ENCODE measurements at regions of chr17 and their contacts with region 1.

Region 1: DNA sequence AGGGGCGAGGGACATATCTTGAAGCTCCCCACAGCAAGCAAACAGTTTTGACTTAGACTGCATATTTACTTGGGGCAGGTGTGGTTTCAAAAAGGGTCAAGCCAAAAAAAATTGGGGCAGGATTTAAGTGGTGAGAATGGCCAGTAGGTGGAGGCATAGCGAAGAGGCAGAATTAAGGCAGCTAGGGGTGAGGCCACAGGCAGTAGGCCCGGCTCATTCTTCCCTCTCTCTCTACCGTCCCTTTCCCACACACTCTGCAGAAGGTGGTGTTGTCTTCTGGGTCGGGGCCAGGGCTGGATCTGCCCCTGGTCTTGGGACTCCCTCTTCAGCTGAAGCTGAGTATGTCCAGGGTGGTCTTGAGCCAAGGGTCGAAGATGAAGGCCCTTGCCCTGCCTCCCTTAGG is 2.6 kb downstream of the SHBG start:
- DNase-seq: peak; percentile 39 to 66
- H3K4me3 ChIP-seq: no peak overlapping the region
- H3K27ac ChIP-seq: no peak overlapping the region
- H3K4me1 ChIP-seq: peaks cover 0 to 12% (median 3%) of the 10 kb centered on the region in 4 experiments; a peak in 3 of 7 replicates
- H3K27me3 ChIP-seq: no peaks in the 10 kb centered on the region
- CTCF ChIP-seq: peak; percentile 61 to 85 (median 79)
- EP300 ChIP-seq: no peak
- POLR2A ChIP-seq: no peak
- RAD21 ChIP-seq: peak; percentile 75 to 81

Region 2: GRCh38 chr17:7496470-7497183 is 135.9 kb before region 1 on chr17:
- CTCF ChIA-PET with region 1: no interaction called
- POLR2A ChIA-PET with region 1: no interaction called
- DNase-seq: no peak
- H3K4me3 ChIP-seq: no peak overlapping the region
- H3K27ac ChIP-seq: no peak overlapping the region
- H3K4me1 ChIP-seq: no peaks in the 10 kb centered on the region
- H3K27me3 ChIP-seq: no peaks in the 10 kb centered on the region
- CTCF ChIP-seq: no peak
- EP300 ChIP-seq: no peak
- POLR2A ChIP-seq: no peak
- RAD21 ChIP-seq: no peak

Region 3: DNA sequence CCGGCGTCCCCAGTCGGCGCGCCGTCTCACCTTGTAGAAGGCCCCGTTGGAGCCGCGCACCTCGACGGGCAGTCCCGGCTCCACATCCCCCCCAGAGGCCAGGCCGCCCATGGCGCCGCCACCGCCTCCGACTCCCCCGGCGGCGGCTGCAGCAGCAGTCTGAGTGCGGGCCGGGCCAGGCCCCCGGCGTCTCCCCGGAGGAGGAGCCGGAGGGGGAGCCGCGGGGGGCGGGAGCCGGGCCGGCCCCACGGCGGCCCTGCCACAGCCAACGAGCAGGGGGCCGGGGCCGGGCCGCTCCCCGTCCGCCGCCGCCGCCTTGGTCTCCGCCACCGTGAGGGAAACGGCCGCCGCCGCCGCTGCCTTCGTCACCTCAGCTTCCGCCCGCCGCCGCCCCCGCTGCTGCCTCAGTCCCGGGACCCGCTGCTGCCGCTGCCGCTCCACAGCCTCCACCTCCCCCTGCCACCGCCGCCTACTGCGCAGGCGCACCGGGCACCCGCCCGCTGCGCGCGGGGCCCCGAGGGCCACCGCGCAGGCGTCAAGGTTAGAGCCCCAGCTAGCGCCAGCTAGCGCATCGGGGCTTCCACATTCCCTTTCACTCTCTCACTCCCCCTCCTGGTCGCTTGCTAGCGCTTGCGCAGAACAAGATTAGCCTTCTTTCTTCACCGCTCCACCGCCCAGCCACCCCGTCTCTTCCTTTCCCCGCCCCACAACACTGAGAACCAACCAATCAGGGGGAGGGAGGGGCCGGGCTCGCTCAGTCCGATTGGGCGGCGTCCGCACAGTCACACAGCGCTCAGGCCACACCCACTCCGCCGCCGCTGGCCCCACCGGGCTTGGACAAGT is 17.9 kb before region 1 on chr17 and contains the start of gene FXR2:
- CTCF ChIA-PET with region 1: interaction called, 92 read pairs
- POLR2A ChIA-PET with region 1: interaction called, 19 read pairs
- DNase-seq: peak; percentile 97 to 100
- H3K4me3 ChIP-seq: peak within 1 kb of the TSS; percentile 87 to 95 (median 92)
- H3K27ac ChIP-seq: peak within 1 kb of the TSS; percentile 52; the same call in 1 of the 2 replicates
- H3K4me1 ChIP-seq: peaks cover 0 to 5% (median 1%) of the 10 kb centered on the region in 4 experiments; a peak in 4 of 7 replicates
- H3K27me3 ChIP-seq: no peaks in the 10 kb centered on the region
- CTCF ChIP-seq: peak; percentile 62 to 76 (median 64)
- EP300 ChIP-seq: no peak
- POLR2A ChIP-seq: peak in 1 of 2 experiments; percentile 24; a peak in 1 of 3 replicates
- RAD21 ChIP-seq: peak; percentile 14 to 29
- total RNA-seq, gene FXR2: 26.2 and 26.8 TPM in 2 replicates

Region 4: DNA sequence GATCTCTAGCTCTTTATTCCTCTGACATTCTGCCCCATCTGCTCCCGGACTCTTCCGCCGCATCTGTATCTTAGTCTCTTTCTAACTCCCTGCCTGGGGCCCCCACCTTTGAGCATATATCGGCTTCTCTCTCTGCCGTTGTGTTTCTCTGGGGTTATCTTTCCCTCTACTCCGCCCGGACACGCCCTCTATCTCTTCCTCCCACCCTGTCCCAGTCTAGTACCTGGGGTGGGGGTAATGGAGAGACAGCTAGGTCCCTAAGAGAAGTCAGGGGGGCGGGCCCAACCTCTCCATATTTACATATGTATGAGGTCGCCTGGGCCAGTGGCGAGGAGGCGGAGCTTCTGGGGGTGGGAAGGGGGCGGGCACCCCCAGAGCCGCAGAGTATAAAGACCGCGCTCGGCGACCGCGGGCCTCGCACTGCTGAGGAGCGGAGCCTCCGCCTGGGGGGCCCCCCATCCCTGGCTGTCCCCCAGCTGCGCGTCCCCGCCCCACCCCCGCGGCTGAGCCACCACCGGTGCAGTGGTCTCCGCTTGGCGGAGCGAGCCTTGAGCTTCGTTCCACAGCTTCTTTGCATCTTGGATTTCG is 18.1 kb after region 1 on chr17 and contains the start of gene ATP1B2:
- CTCF ChIA-PET with region 1: interaction called, 211 read pairs
- POLR2A ChIA-PET with region 1: interaction called, 2,272 read pairs
- DNase-seq: peak; percentile 72 to 90
- H3K4me3 ChIP-seq: peak within 1 kb of the TSS; percentile 43 to 87 (median 63)
- H3K27ac ChIP-seq: no peak within 1 kb of the TSS
- H3K4me1 ChIP-seq: peaks cover 0 to 12% (median 8%) of the 10 kb centered on the region in 4 experiments; a peak in 5 of 7 replicates
- H3K27me3 ChIP-seq: peaks cover 0 to 13% (median 4%) of the 10 kb centered on the region in 4 experiments; a peak in 4 of 7 replicates
- CTCF ChIP-seq: no peak
- EP300 ChIP-seq: no peak
- POLR2A ChIP-seq: peak in 1 of 2 experiments; percentile 81; a peak in 2 of 3 replicates
- RAD21 ChIP-seq: no peak
- total RNA-seq, gene ATP1B2: 19.8 and 21.0 TPM in 2 replicates

Region 5: GRCh38 chr17:7716901-7717755 is 84.6 kb after region 1 on chr17 and contains the start of gene DNAH2:
- CTCF ChIA-PET with region 1: interaction called, 86 read pairs
- POLR2A ChIA-PET with region 1: interaction called, 4 read pairs
- DNase-seq: peak; percentile 91 to 96
- H3K4me3 ChIP-seq: peak within 1 kb of the TSS; percentile 54 to 81 (median 71)
- H3K27ac ChIP-seq: no peak within 1 kb of the TSS; the same call in 1 of the 2 replicates
- H3K4me1 ChIP-seq: peaks cover 6 to 20% (median 14%) of the 10 kb centered on the region in 4 experiments
- H3K27me3 ChIP-seq: peaks cover 0 to 19% (median 7%) of the 10 kb centered on the region in 4 experiments; a peak in 3 of 7 replicates
- CTCF ChIP-seq: peak; percentile 60 to 74 (median 69)
- EP300 ChIP-seq: no peak
- POLR2A ChIP-seq: no peak
- RAD21 ChIP-seq: peak; percentile 51 to 59
- total RNA-seq, gene DNAH2: 0.13 and 0.21 TPM in 2 replicates

Measured in H1 (cell line).